Endothelial cell of umbilical vein (primary cell): ENCODE measurements at regions of chr14 and their contacts with region 1.

Region 1: GRCh38 chr14:105351920-105352851 is 37.6 kb downstream of the PACS2 start:
- DNase-seq: peak; percentile 89
- H3K4me3 ChIP-seq: no peak overlapping the region
- H3K27ac ChIP-seq: no peak overlapping the region
- H3K4me1 ChIP-seq: peaks cover 2% of the 10 kb centered on the region
- H3K27me3 ChIP-seq: no peaks in the 10 kb centered on the region
- CTCF ChIP-seq: peak; percentile 76 to 85
- POLR2A ChIP-seq: no peak

Region 2: DNA sequence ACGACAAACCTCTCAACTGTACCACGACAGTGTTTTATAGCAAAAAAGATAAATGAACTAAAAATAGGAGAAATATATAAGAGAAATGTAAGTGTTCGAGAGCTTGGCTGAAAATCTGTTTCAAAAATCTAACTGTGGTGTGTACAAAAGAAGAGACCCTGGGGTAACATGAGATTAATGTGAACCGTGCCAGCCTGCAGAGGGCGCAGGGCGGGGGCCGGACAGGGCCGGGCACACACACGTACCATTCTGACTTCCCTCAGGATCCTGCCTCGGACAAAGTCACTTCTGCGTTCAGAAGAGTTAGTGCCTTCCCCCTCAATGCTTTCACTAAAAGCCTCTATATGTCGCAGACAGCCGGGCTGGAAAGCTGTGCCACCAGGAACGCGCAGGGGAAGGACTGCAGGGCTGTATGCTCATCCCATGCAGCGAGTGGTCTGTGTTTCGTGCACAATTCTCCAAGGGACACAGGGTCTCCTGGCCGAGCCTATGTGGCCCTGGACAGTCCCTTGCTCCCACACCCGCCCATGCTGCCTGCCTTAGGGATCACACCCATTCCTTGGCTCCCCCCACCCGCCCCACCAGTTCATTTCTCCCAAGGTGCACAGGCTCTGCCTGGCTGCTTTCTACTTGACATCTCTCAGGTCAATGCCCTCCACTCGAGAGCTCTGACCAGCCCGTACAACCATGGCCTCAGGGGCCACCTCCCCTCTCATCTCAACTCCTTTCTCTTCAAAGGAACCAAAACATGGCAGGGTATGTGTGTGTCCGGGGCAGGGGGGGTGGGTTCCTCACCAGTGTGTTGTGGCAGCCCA is 339.8 kb before region 1 on chr14:
- CTCF ChIA-PET with region 1: no interaction called
- POLR2A ChIA-PET with region 1: no interaction called
- dilution Hi-C with region 1: no loop called
- intact Hi-C with region 1: no loop called
- DNase-seq: no peak
- H3K4me3 ChIP-seq: no peak overlapping the region
- H3K27ac ChIP-seq: no peak overlapping the region
- H3K4me1 ChIP-seq: peaks cover 25% of the 10 kb centered on the region
- H3K27me3 ChIP-seq: no peaks in the 10 kb centered on the region
- CTCF ChIP-seq: peak; percentile 17 to 34
- POLR2A ChIP-seq: no peak

Region 3: GRCh38 chr14:105100931-105101330 is 251.3 kb before region 1 on chr14:
- CTCF ChIA-PET with region 1: no interaction called
- POLR2A ChIA-PET with region 1: no interaction called
- dilution Hi-C with region 1: no loop called
- intact Hi-C with region 1: no loop called
- DNase-seq: no peak
- H3K4me3 ChIP-seq: no peak overlapping the region
- H3K27ac ChIP-seq: no peak overlapping the region
- H3K4me1 ChIP-seq: no peaks in the 10 kb centered on the region
- H3K27me3 ChIP-seq: peaks cover 12 to 32% of the 10 kb centered on the region in 2 experiments
- CTCF ChIP-seq: no peak
- POLR2A ChIP-seq: no peak

Region 4: DNA sequence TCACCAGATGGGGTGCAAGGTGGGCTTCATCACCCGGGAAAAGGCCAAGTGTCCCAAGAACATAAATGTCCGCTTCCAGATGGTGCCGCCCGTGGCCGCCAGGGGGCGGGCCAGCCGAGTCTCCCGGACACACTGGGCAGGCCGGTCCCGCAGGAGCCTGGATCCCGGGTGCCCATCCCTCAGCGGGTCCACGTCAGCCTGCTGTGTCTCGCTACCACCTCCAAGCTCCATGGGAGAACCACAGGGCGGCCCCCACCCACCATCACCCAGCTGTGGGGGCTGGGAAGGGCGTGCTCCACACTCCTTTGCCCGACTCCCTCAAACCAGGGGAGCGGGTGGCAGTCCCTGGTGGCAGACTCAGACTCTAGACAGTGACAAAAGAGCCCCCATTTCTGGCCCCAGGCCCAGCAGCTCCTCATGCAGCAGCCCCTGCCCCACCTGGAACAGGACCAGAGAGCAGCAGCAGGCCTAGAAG is 149.1 kb before region 1 on chr14:
- CTCF ChIA-PET with region 1: interaction called, 13 read pairs
- POLR2A ChIA-PET with region 1: no interaction called
- dilution Hi-C with region 1: no loop called
- intact Hi-C with region 1: loop called (anchors 1 kb)
- DNase-seq: peak; percentile 55
- H3K4me3 ChIP-seq: no peak overlapping the region
- H3K27ac ChIP-seq: no peak overlapping the region
- H3K4me1 ChIP-seq: peaks cover 24% of the 10 kb centered on the region
- H3K27me3 ChIP-seq: no peaks in the 10 kb centered on the region
- CTCF ChIP-seq: peak; percentile 94 to 96
- POLR2A ChIP-seq: no peak

Region 5: DNA sequence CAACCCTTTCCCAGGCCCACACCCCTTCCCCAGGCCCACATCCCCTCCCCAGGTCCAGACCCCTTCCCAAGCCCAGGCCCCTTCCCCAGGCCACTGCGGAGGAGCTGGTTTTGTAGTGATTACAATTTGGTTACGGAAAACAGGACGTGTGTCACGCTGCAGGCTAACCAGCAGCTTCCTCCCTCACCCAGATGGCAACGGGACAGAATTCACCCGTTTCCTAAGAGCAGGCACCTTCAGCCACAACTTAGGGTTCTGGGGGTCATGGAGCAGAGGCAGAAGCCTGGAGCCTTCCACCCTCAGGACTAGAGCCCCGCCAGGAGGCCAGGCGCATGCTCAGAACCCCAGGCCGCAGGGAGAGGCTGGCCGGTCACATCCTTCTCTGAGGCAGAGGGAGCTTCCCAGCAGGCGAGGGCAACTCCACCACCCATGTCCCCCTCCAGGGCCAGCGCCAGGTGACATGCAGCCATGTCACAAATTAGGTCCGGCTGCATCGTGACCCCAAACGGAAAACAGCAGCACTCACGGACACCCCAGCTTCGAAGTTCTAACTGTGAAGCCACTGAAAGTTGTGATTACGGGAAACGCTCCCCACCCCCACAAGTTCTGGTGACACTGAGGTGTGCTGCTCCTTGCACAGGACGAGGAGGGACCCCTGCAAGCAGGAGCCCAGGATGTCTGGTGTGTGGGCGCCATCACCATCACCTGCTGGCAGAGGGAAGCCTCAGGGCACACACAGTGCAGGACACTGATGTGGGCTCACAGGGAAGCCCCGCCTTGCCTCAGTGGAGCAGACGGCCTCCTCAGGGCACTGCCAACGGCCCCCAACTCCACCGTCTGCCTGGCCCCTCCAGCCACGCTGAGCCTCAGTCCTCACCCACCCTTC is 59.1 kb before region 1 on chr14:
- CTCF ChIA-PET with region 1: interaction called, 6 read pairs
- POLR2A ChIA-PET with region 1: no interaction called
- dilution Hi-C with region 1: no loop called
- intact Hi-C with region 1: loop called (anchors 2 kb)
- DNase-seq: peak; percentile 64
- H3K4me3 ChIP-seq: no peak overlapping the region
- H3K27ac ChIP-seq: peak overlapping the region; percentile 46
- H3K4me1 ChIP-seq: peaks cover 27% of the 10 kb centered on the region
- H3K27me3 ChIP-seq: no peaks in the 10 kb centered on the region
- CTCF ChIP-seq: no peak
- POLR2A ChIP-seq: no peak

Region 6: DNA sequence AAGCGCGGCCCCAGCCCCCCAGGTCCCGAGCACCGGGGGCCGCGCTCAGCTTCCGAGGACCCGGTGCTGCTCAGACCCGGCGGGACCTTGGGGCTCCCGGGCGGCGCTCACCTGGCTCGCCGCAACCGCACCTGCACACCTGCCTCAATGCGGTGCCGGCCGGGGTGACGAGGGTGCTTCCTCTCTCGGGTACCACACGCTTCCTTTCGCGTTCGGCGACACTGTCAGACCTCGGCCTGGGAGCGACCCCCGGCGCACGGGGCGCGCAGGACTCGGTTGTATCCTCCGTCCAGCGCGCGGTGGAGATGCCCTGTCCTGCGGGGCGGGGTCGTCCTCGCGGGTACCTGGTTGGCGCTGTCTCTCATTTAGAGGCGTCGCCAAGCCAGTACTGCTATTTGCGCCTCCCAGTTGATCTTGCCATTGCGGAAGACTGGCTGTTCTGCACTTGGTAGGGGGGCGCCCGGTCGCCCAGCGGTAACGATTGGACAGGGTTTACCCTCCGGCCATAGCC is 36.9 kb before region 1 on chr14:
- CTCF ChIA-PET with region 1: interaction called, 12 read pairs
- POLR2A ChIA-PET with region 1: no interaction called
- dilution Hi-C with region 1: no loop called
- intact Hi-C with region 1: no loop called
- DNase-seq: peak; percentile 41
- H3K4me3 ChIP-seq: peak overlapping the region; percentile 3 to 61 (median 49)
- H3K27ac ChIP-seq: no peak overlapping the region
- H3K4me1 ChIP-seq: peaks cover 8% of the 10 kb centered on the region
- H3K27me3 ChIP-seq: no peaks in the 10 kb centered on the region
- CTCF ChIP-seq: no peak
- POLR2A ChIP-seq: no peak